ENCODE measurements at regions of chr12 and their contacts with region 1.

Region 1: GRCh38 chr12:106357549-106358395 is at the start of gene POLR3B:
- DNase-seq: peak; percentile 93 to 98 (median 96)
- ATAC-seq: peak; percentile 92
- H3K4me3 ChIP-seq: peak within 1 kb of the TSS; percentile 97
- H3K4me3 Mint-ChIP-seq: peak within 1 kb of the TSS; percentile 91
- H3K27ac ChIP-seq: peak within 1 kb of the TSS; percentile 84 to 90
- H3K27ac Mint-ChIP-seq: peak within 1 kb of the TSS; percentile 90
- H3K4me1 ChIP-seq: peaks cover 13% of the 10 kb centered on the region
- H3K4me1 Mint-ChIP-seq: peaks cover 18% of the 10 kb centered on the region
- H3K27me3 ChIP-seq: no peaks in the 10 kb centered on the region
- H3K27me3 Mint-ChIP-seq: no peaks in the 10 kb centered on the region
- CTCF ChIP-seq: peak; percentile 79
- total RNA-seq, gene POLR3B: 2.5 to 2.6 TPM

Region 2: DNA sequence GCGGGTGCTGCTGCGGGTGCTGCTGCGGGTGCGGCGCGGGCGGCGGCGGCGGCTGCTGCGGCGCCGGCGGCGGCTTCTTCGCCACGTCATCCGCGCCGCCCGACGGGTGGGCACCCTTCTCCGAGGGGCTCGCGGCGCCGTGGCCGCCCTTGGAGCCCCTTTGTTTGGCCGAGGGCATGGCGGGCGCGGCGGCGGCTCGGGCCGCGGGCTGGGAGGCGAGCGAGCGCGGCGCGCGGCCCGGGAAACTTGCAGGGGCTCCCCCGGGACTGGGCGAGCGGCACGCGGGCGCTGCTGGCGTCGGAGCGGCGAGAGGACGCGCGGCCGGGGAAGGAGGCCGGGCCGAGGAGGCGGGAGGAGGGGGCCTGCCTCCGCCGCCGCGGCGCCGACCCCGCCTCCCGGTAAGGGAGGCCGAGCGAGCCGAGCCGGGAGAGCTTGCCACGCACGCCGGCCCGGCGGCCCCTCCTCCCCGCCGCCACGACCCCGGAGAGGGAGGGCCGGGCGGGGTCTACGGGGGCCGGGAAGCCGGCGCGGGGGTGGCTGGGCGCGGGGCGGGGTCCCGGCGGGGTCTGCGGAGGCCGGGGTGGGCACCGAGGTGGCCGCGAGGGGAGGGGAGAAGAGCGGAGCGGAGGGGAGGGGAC is 110.0 kb before region 1 on chr12 and contains the start of gene CKAP4:
- CTCF ChIA-PET with region 1: no interaction called
- POLR2A ChIA-PET with region 1: no interaction called
- intact Hi-C with region 1: loop called (anchors 1 to 2 kb)
- DNase-seq: peak; percentile 10 to 83 (median 58)
- ATAC-seq: peak; percentile 55
- H3K4me3 ChIP-seq: peak within 1 kb of the TSS; percentile 66 to 84
- H3K4me3 Mint-ChIP-seq: peak within 1 kb of the TSS; percentile 86
- H3K27ac ChIP-seq: peak within 1 kb of the TSS; percentile 72 to 73
- H3K27ac Mint-ChIP-seq: peak within 1 kb of the TSS; percentile 95
- H3K4me1 ChIP-seq: peaks cover 32% of the 10 kb centered on the region
- H3K4me1 Mint-ChIP-seq: peaks cover 35% of the 10 kb centered on the region
- H3K27me3 ChIP-seq: no peaks in the 10 kb centered on the region
- H3K27me3 Mint-ChIP-seq: no peaks in the 10 kb centered on the region
- CTCF ChIP-seq: no peak
- total RNA-seq, gene CKAP4: 19.3 to 19.7 TPM

Region 3: GRCh38 chr12:106274575-106275121 is 83.1 kb before region 1 on chr12:
- CTCF ChIA-PET with region 1: no interaction called
- POLR2A ChIA-PET with region 1: no interaction called
- intact Hi-C with region 1: no loop called
- DNase-seq: no peak
- ATAC-seq: no peak
- H3K4me3 ChIP-seq: no peak overlapping the region
- H3K4me3 Mint-ChIP-seq: no peak overlapping the region
- H3K27ac ChIP-seq: no peak overlapping the region
- H3K27ac Mint-ChIP-seq: no peak overlapping the region
- H3K4me1 ChIP-seq: no peaks in the 10 kb centered on the region
- H3K4me1 Mint-ChIP-seq: no peaks in the 10 kb centered on the region
- H3K27me3 ChIP-seq: no peaks in the 10 kb centered on the region
- H3K27me3 Mint-ChIP-seq: no peaks in the 10 kb centered on the region
- CTCF ChIP-seq: no peak

Region 4: DNA sequence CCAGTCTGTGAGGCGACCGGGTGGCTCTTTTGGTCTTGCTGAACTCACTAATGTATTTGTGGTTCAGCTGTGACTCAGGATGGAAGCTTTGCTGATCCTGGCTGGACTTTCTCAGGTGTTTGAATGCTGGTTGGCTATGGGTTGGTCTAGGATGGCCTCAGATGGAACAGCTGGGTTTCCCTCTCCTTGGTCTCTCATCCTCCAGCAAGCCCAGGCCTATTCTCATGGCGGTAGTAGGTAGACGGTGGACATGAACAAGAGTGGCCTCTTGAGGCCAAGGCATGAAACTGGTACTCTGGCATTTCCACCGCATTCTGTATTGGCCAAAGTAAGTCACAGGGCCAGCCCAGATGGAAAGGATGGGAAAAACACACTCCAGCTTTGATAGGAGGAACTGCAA is 12.0 kb before region 1 on chr12:
- CTCF ChIA-PET with region 1: interaction called, 10 read pairs
- POLR2A ChIA-PET with region 1: interaction called, 4 read pairs
- intact Hi-C with region 1: no loop called
- DNase-seq: peak in 2 of 9 experiments; percentile 33 to 41
- ATAC-seq: peak; percentile 38
- H3K4me3 ChIP-seq: no peak overlapping the region
- H3K4me3 Mint-ChIP-seq: no peak overlapping the region
- H3K27ac ChIP-seq: no peak overlapping the region
- H3K27ac Mint-ChIP-seq: peak overlapping the region; percentile 53
- H3K4me1 ChIP-seq: no peaks in the 10 kb centered on the region
- H3K4me1 Mint-ChIP-seq: no peaks in the 10 kb centered on the region
- H3K27me3 ChIP-seq: no peaks in the 10 kb centered on the region
- H3K27me3 Mint-ChIP-seq: no peaks in the 10 kb centered on the region
- CTCF ChIP-seq: no peak

Region 5: GRCh38 chr12:106415134-106415533 is 57.4 kb after region 1 on chr12:
- CTCF ChIA-PET with region 1: no interaction called
- POLR2A ChIA-PET with region 1: no interaction called
- intact Hi-C with region 1: no loop called
- DNase-seq: no peak
- ATAC-seq: no peak
- H3K4me3 ChIP-seq: no peak overlapping the region
- H3K4me3 Mint-ChIP-seq: no peak overlapping the region
- H3K27ac ChIP-seq: no peak overlapping the region
- H3K27ac Mint-ChIP-seq: no peak overlapping the region
- H3K4me1 ChIP-seq: no peaks in the 10 kb centered on the region
- H3K4me1 Mint-ChIP-seq: no peaks in the 10 kb centered on the region
- H3K27me3 ChIP-seq: no peaks in the 10 kb centered on the region
- H3K27me3 Mint-ChIP-seq: no peaks in the 10 kb centered on the region
- CTCF ChIP-seq: no peak

Region 6: GRCh38 chr12:106774005-106774807 is 416.4 kb after region 1 on chr12 and contains the start of gene RIC8B:
- CTCF ChIA-PET with region 1: no interaction called
- POLR2A ChIA-PET with region 1: no interaction called
- intact Hi-C with region 1: loop called (anchors 2 to 10 kb)
- DNase-seq: peak; percentile 56 to 92 (median 74)
- ATAC-seq: peak; percentile 81
- H3K4me3 ChIP-seq: peak within 1 kb of the TSS; percentile 80 to 96
- H3K4me3 Mint-ChIP-seq: peak within 1 kb of the TSS; percentile 96
- H3K27ac ChIP-seq: peak within 1 kb of the TSS; percentile 78 to 96
- H3K27ac Mint-ChIP-seq: peak within 1 kb of the TSS; percentile 99
- H3K4me1 ChIP-seq: peaks cover 19% of the 10 kb centered on the region
- H3K4me1 Mint-ChIP-seq: peaks cover 40% of the 10 kb centered on the region
- H3K27me3 ChIP-seq: no peaks in the 10 kb centered on the region
- H3K27me3 Mint-ChIP-seq: no peaks in the 10 kb centered on the region
- CTCF ChIP-seq: no peak
- total RNA-seq, gene RIC8B: 5.6 to 6.4 TPM

Region 7: DNA sequence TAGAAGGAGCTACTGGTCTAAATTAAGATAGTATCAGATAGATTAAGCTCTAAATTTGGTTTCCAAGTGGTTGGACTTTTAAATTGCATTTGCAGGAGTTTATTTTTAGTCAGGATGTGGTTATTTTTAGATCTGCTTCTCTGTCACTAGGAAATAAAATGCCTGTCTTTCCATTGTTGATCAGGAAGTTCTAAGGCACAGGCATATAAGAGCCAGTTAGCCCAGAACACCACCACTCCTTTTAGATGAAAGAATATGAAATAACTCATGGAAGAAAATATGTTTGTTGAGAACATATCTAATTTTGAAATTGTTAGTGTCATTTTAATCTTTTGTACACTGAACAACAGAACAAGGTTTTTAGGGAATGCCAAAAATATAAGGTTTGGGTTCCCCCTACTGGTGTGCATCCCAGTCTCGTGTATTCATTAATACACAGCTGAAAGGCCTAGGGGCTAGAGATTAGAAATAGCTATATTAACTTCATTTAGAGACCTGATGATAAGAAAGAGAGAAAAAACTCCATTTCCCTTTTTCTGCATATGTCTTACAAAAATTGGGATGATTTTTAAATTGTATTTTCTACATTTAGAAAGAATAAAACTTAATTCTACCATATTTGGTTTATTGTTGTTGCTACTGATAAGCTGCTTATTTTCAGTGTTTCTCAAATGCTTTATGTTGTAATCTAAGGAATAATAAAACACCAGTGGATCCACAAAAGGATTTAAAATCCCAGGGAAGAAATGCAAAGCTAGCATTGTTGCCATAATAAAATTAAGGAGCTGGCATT is 483.9 kb after region 1 on chr12:
- CTCF ChIA-PET with region 1: interaction called, 4 read pairs
- POLR2A ChIA-PET with region 1: no interaction called
- intact Hi-C with region 1: loop called in 1 of 2 experiments (anchors 1 kb)
- DNase-seq: peak in 8 of 9 experiments; percentile 3 to 62 (median 39)
- ATAC-seq: peak; percentile 46
- H3K4me3 ChIP-seq: no peak overlapping the region
- H3K4me3 Mint-ChIP-seq: no peak overlapping the region
- H3K27ac ChIP-seq: no peak overlapping the region
- H3K27ac Mint-ChIP-seq: no peak overlapping the region
- H3K4me1 ChIP-seq: peaks cover 5% of the 10 kb centered on the region
- H3K4me1 Mint-ChIP-seq: peaks cover 26% of the 10 kb centered on the region
- H3K27me3 ChIP-seq: no peaks in the 10 kb centered on the region
- H3K27me3 Mint-ChIP-seq: no peaks in the 10 kb centered on the region
- CTCF ChIP-seq: peak; percentile 65

Region 8: DNA sequence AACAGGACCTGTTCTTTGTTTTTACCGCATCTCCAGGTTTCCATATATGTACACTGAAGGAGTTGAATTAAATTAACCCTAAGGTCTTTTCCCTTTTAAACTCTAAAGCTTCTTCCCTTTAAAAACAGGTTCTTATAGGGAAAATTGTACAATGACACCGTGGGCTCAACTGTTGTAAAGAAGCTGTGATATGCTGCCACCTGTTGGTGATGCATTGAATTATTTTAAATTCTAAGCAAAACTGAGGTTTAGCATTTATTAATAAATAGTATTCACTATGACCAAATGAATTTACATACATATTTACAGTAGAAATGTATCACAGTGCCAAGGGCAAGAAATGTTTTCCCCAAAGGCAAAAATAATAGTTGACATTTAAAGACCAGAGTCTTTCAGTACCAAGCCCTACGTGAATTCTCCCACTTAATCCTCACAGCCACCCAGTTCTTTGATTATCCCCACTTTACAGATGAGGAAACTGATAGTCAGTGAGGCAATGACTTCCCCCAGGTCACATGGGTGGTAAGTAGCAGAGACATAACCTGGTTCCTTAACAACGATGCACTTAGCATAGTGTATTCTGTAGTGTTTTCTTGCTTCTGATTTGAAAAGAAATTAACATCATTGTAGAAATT is 562.3 kb after region 1 on chr12:
- CTCF ChIA-PET with region 1: interaction called, 13 read pairs
- POLR2A ChIA-PET with region 1: no interaction called
- intact Hi-C with region 1: loop called in 1 of 2 experiments (anchors 1 kb)
- DNase-seq: peak in 3 of 9 experiments; percentile 32 to 67 (median 58)
- ATAC-seq: no peak
- H3K4me3 ChIP-seq: no peak overlapping the region
- H3K4me3 Mint-ChIP-seq: no peak overlapping the region
- H3K27ac ChIP-seq: no peak overlapping the region
- H3K27ac Mint-ChIP-seq: no peak overlapping the region
- H3K4me1 ChIP-seq: peaks cover 7% of the 10 kb centered on the region
- H3K4me1 Mint-ChIP-seq: peaks cover 9% of the 10 kb centered on the region
- H3K27me3 ChIP-seq: no peaks in the 10 kb centered on the region
- H3K27me3 Mint-ChIP-seq: peaks cover 3% of the 10 kb centered on the region
- CTCF ChIP-seq: peak; percentile 95

Region 9: DNA sequence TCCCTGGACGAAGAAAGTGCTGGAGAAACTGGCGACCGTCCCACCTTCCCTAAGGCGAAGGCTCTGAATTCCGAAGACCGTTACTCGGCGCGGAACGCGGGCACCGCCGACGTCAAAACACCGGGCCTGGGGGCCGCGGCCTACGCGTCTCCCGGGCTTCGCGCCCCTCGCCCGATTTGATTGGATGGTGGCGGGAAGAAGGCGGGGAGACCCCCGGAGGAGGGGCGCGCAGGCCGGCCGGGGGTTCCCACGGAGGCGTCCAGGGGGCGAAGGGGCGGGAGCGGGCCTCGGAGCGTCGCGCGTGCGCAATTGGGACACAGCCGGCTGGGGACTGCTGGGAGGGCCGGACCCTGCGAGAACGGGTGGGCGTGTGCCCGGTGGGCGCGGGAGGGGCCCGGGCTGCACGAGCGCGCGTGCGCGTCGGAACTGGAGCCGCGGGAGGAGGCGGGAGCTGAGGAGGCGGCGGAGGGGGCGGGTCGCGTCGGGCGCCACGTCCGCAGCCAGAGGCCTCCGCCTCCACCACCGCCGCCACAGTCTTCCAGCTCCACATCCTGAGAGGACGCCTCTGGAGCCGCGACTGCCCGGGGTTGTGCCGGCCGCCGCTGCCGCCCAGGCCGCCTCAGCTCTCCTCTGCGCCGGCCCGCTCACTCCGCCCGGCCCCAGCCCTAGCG is 597.7 kb after region 1 on chr12 and contains the start of gene TMEM263:
- CTCF ChIA-PET with region 1: no interaction called
- POLR2A ChIA-PET with region 1: interaction called, 11 read pairs
- intact Hi-C with region 1: loop called in 1 of 2 experiments (anchors 1 kb)
- DNase-seq: peak; percentile 83 to 98 (median 93)
- ATAC-seq: peak; percentile 81
- H3K4me3 ChIP-seq: peak within 1 kb of the TSS; percentile 87 to 93
- H3K4me3 Mint-ChIP-seq: peak within 1 kb of the TSS; percentile 97
- H3K27ac ChIP-seq: peak within 1 kb of the TSS; percentile 76 to 90
- H3K27ac Mint-ChIP-seq: peak within 1 kb of the TSS; percentile 96
- H3K4me1 ChIP-seq: peaks cover 18% of the 10 kb centered on the region
- H3K4me1 Mint-ChIP-seq: peaks cover 41% of the 10 kb centered on the region
- H3K27me3 ChIP-seq: no peaks in the 10 kb centered on the region
- H3K27me3 Mint-ChIP-seq: no peaks in the 10 kb centered on the region
- CTCF ChIP-seq: no peak
- total RNA-seq, gene TMEM263: 34.3 to 35.3 TPM